ENCODE measurements at regions of chr4 and their contacts with region 1.

Region 1: DNA sequence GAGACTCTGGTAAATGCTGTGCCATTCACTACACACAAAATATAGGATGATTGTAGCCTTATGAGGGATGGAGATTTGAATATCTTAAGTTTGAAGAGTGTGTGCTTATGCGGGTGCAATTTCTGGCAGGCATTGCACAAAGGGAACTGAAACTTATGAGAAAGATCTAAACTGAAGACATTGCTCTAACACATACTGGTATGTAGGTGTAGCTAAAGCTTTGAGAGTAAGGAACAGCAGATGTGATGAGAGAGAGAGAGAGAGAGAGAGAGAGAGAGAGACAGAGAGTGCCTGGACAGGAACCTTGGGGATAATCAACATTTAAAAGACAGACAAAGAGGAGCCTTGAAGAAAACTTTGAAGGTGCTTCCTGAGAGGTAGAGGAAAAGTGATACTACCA is 379.7 kb downstream of the SPRY1 start:
- DNase-seq: no peak
- H3K4me3 Mint-ChIP-seq: no peak overlapping the region
- H3K27ac Mint-ChIP-seq: no peak overlapping the region
- H3K4me1 Mint-ChIP-seq: peaks cover 6% of the 10 kb centered on the region
- H3K27me3 Mint-ChIP-seq: no peaks in the 10 kb centered on the region
- CTCF ChIP-seq: no peak

Region 2: GRCh38 chr4:123350191-123350544 is 426.1 kb before region 1 on chr4:
- CTCF ChIA-PET with region 1: interaction called, 6 read pairs
- POLR2A ChIA-PET with region 1: no interaction called
- intact Hi-C with region 1: loop called (anchors 10 kb)
- DNase-seq: peak; percentile 73
- H3K4me3 Mint-ChIP-seq: no peak overlapping the region
- H3K27ac Mint-ChIP-seq: no peak overlapping the region
- H3K4me1 Mint-ChIP-seq: peaks cover 23% of the 10 kb centered on the region
- H3K27me3 Mint-ChIP-seq: no peaks in the 10 kb centered on the region
- CTCF ChIP-seq: peak; percentile 35

Region 3: DNA sequence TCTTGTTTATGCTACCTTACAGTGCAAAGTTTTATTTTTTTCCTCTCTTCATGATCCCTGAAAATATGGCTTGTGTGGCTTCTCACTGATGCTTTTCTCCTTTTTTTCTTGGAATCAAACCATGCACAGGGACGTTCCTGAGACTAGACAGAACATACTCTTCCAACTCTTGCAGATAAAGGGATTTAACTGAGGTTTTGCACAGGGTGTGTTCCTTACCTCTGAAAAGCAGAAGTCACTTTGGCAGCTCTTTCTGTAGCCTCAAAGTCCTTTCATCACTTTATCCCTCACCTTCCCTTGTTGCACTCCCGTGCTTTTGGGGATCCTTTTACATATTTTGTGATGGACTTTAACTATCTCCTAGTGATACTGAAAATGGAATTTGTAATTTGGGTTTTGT is 79.6 kb before region 1 on chr4:
- CTCF ChIA-PET with region 1: no interaction called
- POLR2A ChIA-PET with region 1: no interaction called
- intact Hi-C with region 1: no loop called
- DNase-seq: no peak
- H3K4me3 Mint-ChIP-seq: no peak overlapping the region
- H3K27ac Mint-ChIP-seq: no peak overlapping the region
- H3K4me1 Mint-ChIP-seq: peaks cover 7% of the 10 kb centered on the region
- H3K27me3 Mint-ChIP-seq: no peaks in the 10 kb centered on the region
- CTCF ChIP-seq: no peak

Region 4: DNA sequence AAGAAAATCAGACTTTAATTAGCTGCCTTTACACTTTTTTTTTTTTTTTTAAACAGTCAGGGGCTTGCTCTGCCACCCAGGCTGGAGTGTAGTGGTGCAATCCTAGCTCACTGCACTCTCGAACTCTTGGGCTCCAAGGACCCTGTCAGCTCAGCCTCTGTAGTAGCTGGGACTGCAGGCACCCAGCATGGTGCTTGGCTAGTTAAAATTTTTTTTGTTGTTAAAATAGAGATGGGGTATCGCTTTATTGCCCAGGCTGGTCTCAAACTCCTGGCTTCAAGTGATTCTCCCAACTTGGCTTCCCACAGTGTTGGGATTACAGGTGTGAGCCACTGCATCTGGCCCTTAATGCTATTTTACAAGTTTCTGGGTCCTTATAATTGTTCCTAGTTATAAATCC is 20.6 kb before region 1 on chr4:
- CTCF ChIA-PET with region 1: interaction called, 19 read pairs
- POLR2A ChIA-PET with region 1: no interaction called
- intact Hi-C with region 1: no loop called
- DNase-seq: no peak
- H3K4me3 Mint-ChIP-seq: no peak overlapping the region
- H3K27ac Mint-ChIP-seq: no peak overlapping the region
- H3K4me1 Mint-ChIP-seq: no peaks in the 10 kb centered on the region
- H3K27me3 Mint-ChIP-seq: no peaks in the 10 kb centered on the region
- CTCF ChIP-seq: no peak

Region 5: DNA sequence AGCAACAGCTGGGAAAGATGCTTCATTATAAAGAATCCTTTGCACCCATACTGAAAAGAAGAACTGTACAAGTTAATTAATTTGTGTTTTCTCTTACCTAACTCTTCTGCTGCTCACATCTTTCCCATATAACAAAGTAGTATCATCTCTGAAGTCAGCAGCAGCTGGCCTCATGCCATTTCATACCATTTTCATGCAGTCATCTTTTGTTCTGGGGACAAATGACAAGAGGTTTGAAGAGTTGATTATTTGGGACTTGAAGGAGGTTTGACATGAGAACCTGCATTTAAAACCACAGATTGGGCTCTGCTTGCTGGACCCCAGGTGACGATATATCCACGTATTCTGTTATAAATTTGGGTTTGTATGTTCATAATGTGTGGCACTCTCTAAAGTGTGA is 50.6 kb after region 1 on chr4:
- CTCF ChIA-PET with region 1: interaction called, 11 read pairs
- POLR2A ChIA-PET with region 1: no interaction called
- intact Hi-C with region 1: no loop called
- DNase-seq: peak; percentile 44
- H3K4me3 Mint-ChIP-seq: no peak overlapping the region
- H3K27ac Mint-ChIP-seq: no peak overlapping the region
- H3K4me1 Mint-ChIP-seq: peaks cover 38% of the 10 kb centered on the region
- H3K27me3 Mint-ChIP-seq: no peaks in the 10 kb centered on the region
- CTCF ChIP-seq: no peak

Region 6: DNA sequence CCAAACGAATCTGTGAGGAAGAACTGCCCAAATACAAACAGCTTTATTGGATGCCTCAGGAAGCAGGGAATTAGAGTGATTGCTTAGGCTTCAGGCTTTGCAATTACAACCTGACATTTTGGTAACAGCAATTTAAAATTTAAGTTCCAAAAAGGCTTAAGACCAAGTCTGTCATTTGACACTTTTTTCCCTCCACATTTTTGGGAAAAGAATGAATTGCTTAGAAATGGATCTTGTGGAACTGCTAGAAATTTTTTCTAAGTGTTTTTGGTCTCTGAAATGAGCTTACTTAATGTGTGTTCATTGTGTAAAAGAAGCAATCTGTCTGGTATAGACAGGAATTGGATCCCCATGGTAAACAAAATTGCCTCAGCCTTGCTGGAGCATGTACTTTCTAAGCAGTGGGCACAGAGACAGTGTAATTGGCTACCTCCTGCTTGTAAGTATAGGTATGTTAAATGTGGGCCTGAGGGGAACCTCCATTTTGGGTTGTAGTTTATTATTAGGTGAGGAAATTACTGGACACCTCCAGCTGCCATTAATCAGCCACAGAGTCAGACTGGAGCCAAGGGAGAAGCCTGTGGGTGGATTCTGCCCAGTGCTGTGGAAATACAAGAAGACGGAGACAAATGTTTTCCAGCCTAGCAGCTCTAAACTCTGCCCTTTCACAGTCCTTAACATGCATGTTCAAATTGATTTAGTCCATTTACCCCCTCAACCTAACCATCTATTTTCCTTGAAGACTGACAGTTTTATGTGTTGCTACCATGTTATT is 93.2 kb after region 1 on chr4:
- CTCF ChIA-PET with region 1: no interaction called
- POLR2A ChIA-PET with region 1: no interaction called
- intact Hi-C with region 1: no loop called
- DNase-seq: no peak
- H3K4me3 Mint-ChIP-seq: no peak overlapping the region
- H3K27ac Mint-ChIP-seq: no peak overlapping the region
- H3K4me1 Mint-ChIP-seq: no peaks in the 10 kb centered on the region
- H3K27me3 Mint-ChIP-seq: no peaks in the 10 kb centered on the region
- CTCF ChIP-seq: no peak

Region 7: DNA sequence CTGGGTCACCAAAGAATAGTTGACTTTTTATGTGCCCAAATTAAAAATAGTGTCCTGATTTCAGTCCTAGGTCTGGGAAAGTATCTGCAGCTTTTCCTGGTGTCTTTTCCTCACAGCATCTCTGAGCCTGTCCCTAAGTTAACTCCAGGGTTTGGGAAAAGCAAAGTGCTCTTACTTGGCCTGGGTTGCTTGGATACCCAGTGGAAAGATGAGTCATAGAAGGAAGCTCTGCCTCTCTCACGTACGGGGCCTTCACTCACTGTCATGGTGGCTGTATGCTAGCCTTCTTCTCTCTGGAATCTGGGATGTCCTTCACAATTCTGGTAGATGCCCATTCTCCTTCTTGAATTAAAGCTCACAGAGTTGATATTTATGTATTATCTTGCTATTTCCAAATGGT is 329.0 kb after region 1 on chr4:
- CTCF ChIA-PET with region 1: interaction called, 39 read pairs
- POLR2A ChIA-PET with region 1: no interaction called
- intact Hi-C with region 1: no loop called
- DNase-seq: peak; percentile 26
- H3K4me3 Mint-ChIP-seq: no peak overlapping the region
- H3K27ac Mint-ChIP-seq: no peak overlapping the region
- H3K4me1 Mint-ChIP-seq: peaks cover 6% of the 10 kb centered on the region
- H3K27me3 Mint-ChIP-seq: no peaks in the 10 kb centered on the region
- CTCF ChIP-seq: no peak

Region 8: GRCh38 chr4:124322234-124323065 is 546.2 kb after region 1 on chr4:
- CTCF ChIA-PET with region 1: interaction called, 27 read pairs
- POLR2A ChIA-PET with region 1: no interaction called
- intact Hi-C with region 1: loop called (anchors 2 kb)
- DNase-seq: peak; percentile 59
- H3K4me3 Mint-ChIP-seq: no peak overlapping the region
- H3K27ac Mint-ChIP-seq: no peak overlapping the region
- H3K4me1 Mint-ChIP-seq: no peaks in the 10 kb centered on the region
- H3K27me3 Mint-ChIP-seq: no peaks in the 10 kb centered on the region
- CTCF ChIP-seq: peak; percentile 52

Region 9: GRCh38 chr4:125169192-125169591 is 1392.9 kb after region 1 on chr4:
- CTCF ChIA-PET with region 1: no interaction called
- POLR2A ChIA-PET with region 1: no interaction called
- intact Hi-C with region 1: no loop called
- DNase-seq: peak; percentile 19
- H3K4me3 Mint-ChIP-seq: no peak overlapping the region
- H3K27ac Mint-ChIP-seq: no peak overlapping the region
- H3K4me1 Mint-ChIP-seq: peaks cover 5% of the 10 kb centered on the region
- H3K27me3 Mint-ChIP-seq: no peaks in the 10 kb centered on the region
- CTCF ChIP-seq: no peak

Measured in MCF 10A (cell line).